ENCODE measurements at regions of chr14 and their contacts with region 1.

Region 1: DNA sequence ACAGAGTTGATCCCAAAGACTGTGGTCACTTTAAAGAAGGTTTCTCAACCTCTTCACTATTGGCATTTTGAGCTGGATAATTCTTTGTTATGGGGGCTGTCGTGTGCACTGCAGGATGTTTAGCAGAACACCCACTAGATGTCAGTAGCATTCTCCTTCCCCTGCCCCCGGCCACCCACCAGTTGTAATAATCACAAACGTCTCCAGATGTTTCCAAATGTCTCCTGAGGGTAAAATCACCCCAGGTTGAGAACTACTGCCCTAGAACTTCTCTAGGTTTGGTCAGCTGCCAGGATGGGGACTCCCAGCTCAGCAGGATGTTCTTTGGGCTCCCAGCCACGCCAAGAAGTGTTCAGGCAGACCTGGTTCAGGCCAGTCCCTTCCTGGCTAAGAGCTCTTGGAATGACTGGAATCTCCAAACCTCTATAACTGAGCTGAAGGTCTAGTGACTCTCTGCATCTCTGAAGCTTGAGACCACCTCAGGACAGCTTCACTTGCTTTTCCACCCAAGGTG is 12.5 kb upstream of the AJUBA start:
- DNase-seq: no peak
- ATAC-seq: peak; percentile 96
- H3K4me3 ChIP-seq: no peak overlapping the region
- H3K27ac ChIP-seq: 0 out of 2 replicates have a peak overlapping the region, but pooled peaks have one; percentile 18
- H3K4me1 ChIP-seq: peaks cover 4 to 8% of the 10 kb centered on the region in 2 experiments; a peak in 3 of 4 replicates
- H3K27me3 ChIP-seq: no peaks in the 10 kb centered on the region
- CTCF ChIP-seq: peak; percentile 65 to 70 (median 67)
- POLR2A ChIP-seq: no peak
- RAD21 ChIP-seq: peak; percentile 72

Region 2: GRCh38 chr14:22973217-22974032 is 21.4 kb before region 1 on chr14:
- CTCF ChIA-PET with region 1: interaction called, 19 read pairs
- POLR2A ChIA-PET with region 1: no interaction called
- RAD21 ChIA-PET with region 1: no interaction called
- intact Hi-C with region 1: no loop called
- DNase-seq: no peak
- ATAC-seq: peak; percentile 64
- H3K4me3 ChIP-seq: no peak overlapping the region
- H3K27ac ChIP-seq: no peak overlapping the region
- H3K4me1 ChIP-seq: peaks cover 36 to 39% of the 10 kb centered on the region in 2 experiments
- H3K27me3 ChIP-seq: no peaks in the 10 kb centered on the region
- CTCF ChIP-seq: peak in 2 of 3 experiments; percentile 61 to 75; a peak in 4 of 6 replicates
- POLR2A ChIP-seq: no peak
- RAD21 ChIP-seq: no peak

Region 3: GRCh38 chr14:23006544-23007419 is 12.0 kb after region 1 on chr14:
- CTCF ChIA-PET with region 1: interaction called, 52 read pairs
- POLR2A ChIA-PET with region 1: interaction called, 18 read pairs
- RAD21 ChIA-PET with region 1: interaction called in 1 of 2 experiments, 3 read pairs
- intact Hi-C with region 1: no loop called
- DNase-seq: peak; percentile 96
- ATAC-seq: peak; percentile 93
- H3K4me3 ChIP-seq: peak overlapping the region; percentile 64 to 71
- H3K27ac ChIP-seq: peak overlapping the region; percentile 97
- H3K4me1 ChIP-seq: peaks cover 23 to 60% of the 10 kb centered on the region in 2 experiments
- H3K27me3 ChIP-seq: no peaks in the 10 kb centered on the region
- CTCF ChIP-seq: no peak; a peak in 1 of 6 replicates
- POLR2A ChIP-seq: peak; percentile 94
- RAD21 ChIP-seq: no peak

Region 4: DNA sequence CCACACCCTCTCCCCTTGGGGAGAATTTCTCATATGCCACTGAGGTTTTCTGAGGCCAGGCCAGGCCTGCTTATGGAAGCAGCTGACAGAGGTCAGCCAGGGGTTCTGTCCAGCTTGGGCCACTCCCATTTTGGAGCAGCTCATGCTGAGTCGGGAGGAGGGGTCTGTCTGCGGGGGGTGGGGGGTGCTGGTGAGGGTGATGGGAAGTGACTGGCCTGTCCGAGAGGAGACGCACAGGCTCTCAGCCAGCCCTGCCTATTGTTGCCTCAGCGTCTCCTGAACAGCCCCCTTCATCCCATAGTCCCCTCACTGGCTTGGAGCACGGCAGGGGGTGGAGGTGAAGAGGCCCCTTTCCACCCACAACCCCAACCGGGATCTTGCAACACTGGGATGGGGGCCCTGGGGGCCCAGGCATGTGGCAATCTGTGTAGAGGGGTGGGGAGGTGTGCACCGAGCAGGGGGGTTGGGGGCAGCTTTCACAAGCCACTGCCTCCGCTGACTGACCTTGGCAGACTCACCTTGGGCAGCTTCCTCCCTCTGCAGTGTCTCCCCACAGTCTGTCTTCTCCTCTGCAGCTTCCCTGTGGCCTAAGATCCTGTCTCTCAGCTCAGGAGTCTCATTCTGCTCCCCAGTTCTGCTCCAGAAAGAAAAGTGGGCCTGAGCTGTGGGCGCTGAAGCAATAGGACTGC is 118.8 kb after region 1 on chr14:
- CTCF ChIA-PET with region 1: interaction called, 11 read pairs
- POLR2A ChIA-PET with region 1: no interaction called
- RAD21 ChIA-PET with region 1: no interaction called
- intact Hi-C with region 1: no loop called
- DNase-seq: no peak
- ATAC-seq: no peak
- H3K4me3 ChIP-seq: no peak overlapping the region
- H3K27ac ChIP-seq: no peak overlapping the region
- H3K4me1 ChIP-seq: peaks cover 12 to 23% of the 10 kb centered on the region in 2 experiments
- H3K27me3 ChIP-seq: peaks cover 20% of the 10 kb centered on the region; the same call in 1 of the 2 replicates
- CTCF ChIP-seq: no peak
- POLR2A ChIP-seq: no peak
- RAD21 ChIP-seq: no peak